ENCODE measurements at regions of chr14 and their contacts with region 1.

Region 1: DNA sequence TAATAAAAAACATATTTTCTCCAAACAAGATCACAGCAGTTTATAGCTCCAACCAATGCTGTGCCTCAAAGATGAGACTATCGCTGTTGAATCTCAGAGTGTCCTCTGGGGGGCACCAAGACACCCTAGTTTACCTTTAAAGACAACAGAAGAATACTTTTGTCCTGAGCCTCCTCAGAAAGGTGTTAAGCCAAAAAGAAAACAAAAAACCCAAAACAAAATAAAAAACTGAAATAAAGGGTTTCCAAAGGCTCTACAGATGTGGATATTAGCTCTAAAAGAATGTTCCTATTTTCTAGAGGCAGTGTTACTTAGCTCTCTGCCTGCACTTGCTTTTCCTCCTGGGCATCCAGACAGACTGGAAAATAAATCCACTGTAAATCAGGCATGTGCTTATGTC is 86.9 kb upstream of the TTC7B start:
- DNase-seq: peak; percentile 77
- ATAC-seq: peak; percentile 84
- H3K4me3 Mint-ChIP-seq: no peak overlapping the region
- H3K27ac Mint-ChIP-seq: no peak overlapping the region
- H3K4me1 Mint-ChIP-seq: peaks cover 19% of the 10 kb centered on the region
- H3K27me3 Mint-ChIP-seq: no peaks in the 10 kb centered on the region
- CTCF ChIP-seq: peak; percentile 92

Region 2: DNA sequence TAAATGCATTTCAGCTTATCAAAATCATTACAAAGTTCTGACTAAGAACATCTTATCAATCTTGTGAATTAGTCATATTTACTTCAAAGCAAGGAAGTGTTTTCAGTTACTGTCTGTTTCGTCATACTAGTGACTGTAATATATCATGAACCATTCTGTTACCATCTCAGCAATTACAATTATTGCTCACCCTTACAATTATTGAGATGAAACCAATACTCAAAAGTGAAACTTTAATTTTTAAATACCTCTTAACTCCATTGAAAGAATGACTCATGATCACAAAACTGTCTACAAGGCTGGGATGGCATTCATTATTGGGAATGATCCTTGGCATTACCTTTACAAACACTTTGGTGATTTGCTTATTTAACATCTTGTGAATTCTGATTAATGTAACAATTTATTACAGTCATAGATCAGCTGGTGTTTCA is 67.1 kb after region 1 on chr14:
- CTCF ChIA-PET with region 1: interaction called, 27 read pairs
- POLR2A ChIA-PET with region 1: no interaction called
- intact Hi-C with region 1: loop called (anchors 5 kb)
- DNase-seq: no peak
- ATAC-seq: peak; percentile 85
- H3K4me3 Mint-ChIP-seq: peak overlapping the region; percentile 42
- H3K27ac Mint-ChIP-seq: peak overlapping the region; percentile 89
- H3K4me1 Mint-ChIP-seq: peaks cover 49% of the 10 kb centered on the region
- H3K27me3 Mint-ChIP-seq: no peaks in the 10 kb centered on the region
- CTCF ChIP-seq: no peak

Region 3: GRCh38 chr14:91060351-91061055 is 157.4 kb after region 1 on chr14 and contains the start of gene RPS6KA5:
- CTCF ChIA-PET with region 1: interaction called, 13 read pairs
- POLR2A ChIA-PET with region 1: interaction called, 3 read pairs
- intact Hi-C with region 1: loop called (anchors 10 kb)
- DNase-seq: peak; percentile 100
- ATAC-seq: peak; percentile 86
- H3K4me3 Mint-ChIP-seq: peak within 1 kb of the TSS; percentile 77
- H3K27ac Mint-ChIP-seq: peak within 1 kb of the TSS; percentile 58
- H3K4me1 Mint-ChIP-seq: peaks cover 53% of the 10 kb centered on the region
- H3K27me3 Mint-ChIP-seq: no peaks in the 10 kb centered on the region
- CTCF ChIP-seq: no peak
- total RNA-seq, gene RPS6KA5: 12.8 to 12.9 TPM

Region 4: GRCh38 chr14:91138511-91139359 is 235.6 kb after region 1 on chr14:
- CTCF ChIA-PET with region 1: interaction called, 17 read pairs
- POLR2A ChIA-PET with region 1: no interaction called
- intact Hi-C with region 1: no loop called
- DNase-seq: peak; percentile 75
- ATAC-seq: peak; percentile 80
- H3K4me3 Mint-ChIP-seq: no peak overlapping the region
- H3K27ac Mint-ChIP-seq: peak overlapping the region; percentile 55
- H3K4me1 Mint-ChIP-seq: peaks cover 44% of the 10 kb centered on the region
- H3K27me3 Mint-ChIP-seq: no peaks in the 10 kb centered on the region
- CTCF ChIP-seq: peak; percentile 83

Region 5: DNA sequence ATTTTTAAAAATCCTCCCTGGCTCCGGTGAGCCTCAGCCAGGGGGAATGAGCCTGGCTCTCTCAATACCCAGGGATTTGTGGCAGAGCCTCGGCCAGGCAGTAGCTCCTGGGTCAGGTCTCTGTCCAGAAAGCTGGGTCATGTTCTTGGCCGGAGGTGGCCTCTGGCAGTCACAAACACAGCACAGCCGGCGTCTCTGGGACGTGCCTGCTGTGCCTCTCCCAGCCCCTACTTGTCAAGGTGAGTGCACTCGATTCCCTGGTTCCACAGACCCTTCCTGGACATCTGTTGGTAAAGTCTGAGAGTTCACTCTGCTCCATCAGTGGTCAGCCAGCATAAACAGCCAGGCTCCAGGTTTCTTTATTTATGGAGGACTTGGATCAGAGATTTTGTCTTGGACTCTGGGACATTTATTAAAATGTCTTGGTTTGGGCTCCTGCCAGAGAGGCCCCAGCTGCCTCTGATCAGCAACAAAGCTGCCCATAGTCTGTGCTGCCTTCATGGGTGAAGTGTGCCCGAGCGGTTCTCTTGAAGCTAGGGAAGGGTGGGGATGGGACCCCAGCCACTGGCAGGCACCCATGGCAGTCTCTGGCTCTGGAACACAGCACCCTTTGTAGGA is 267.5 kb after region 1 on chr14:
- CTCF ChIA-PET with region 1: interaction called, 175 read pairs
- POLR2A ChIA-PET with region 1: interaction called, 5 read pairs
- intact Hi-C with region 1: loop called (anchors 1 kb)
- DNase-seq: no peak
- ATAC-seq: no peak
- H3K4me3 Mint-ChIP-seq: no peak overlapping the region
- H3K27ac Mint-ChIP-seq: no peak overlapping the region
- H3K4me1 Mint-ChIP-seq: peaks cover 4% of the 10 kb centered on the region
- H3K27me3 Mint-ChIP-seq: no peaks in the 10 kb centered on the region
- CTCF ChIP-seq: no peak

Region 6: DNA sequence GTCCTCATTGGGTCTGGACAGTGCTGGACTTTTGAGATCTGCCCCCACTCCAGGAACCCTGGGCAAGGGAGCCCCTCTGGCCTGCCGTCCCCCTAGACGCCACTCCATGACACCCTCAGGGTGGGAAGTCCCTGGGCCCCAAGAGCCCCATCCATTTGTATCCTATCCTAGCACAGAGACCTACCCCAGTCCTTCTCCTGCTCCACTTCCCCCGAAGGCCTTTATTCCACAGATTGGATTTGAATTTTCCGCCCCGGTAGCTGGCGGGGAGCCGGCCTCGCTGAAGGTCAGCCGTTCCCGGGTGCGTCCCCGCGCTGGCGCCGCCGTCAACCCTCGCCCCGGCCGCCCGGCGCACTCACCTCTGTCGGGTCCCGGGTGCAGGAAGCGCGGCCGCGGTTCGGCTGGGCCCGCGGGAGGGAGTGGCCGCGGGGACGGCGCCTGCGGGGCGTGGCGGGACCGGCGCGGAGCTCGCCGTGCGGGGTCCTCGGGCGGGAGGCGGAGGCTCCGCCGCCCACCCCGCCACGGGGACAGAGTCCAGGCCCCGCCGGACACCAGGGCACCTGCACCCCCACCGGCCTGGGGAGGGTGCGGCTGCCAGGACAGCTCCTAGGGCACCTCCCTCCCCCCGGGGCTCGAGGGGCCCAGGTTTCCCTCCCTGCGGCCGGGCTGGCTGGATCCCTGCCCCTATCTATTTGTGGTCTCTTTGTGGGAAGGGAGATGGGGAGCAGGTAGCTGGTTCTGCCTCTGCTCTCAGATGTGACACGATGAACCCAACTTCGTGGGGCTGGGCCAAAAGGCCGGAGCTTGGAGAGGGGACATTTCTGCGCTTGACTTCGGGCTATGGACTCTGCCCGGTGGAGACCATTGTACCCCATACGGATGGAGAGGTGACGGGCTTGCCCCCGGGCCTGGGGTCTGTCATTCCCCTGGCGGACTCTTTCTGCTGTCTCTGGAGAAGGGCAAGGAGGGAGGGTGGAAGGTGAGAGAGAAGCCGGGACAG is 361.4 kb after region 1 on chr14:
- CTCF ChIA-PET with region 1: no interaction called
- POLR2A ChIA-PET with region 1: no interaction called
- intact Hi-C with region 1: no loop called
- DNase-seq: peak; percentile 32
- ATAC-seq: peak; percentile 32
- H3K4me3 Mint-ChIP-seq: peak overlapping the region; percentile 54
- H3K27ac Mint-ChIP-seq: peak overlapping the region; percentile 63
- H3K4me1 Mint-ChIP-seq: peaks cover 51% of the 10 kb centered on the region
- H3K27me3 Mint-ChIP-seq: no peaks in the 10 kb centered on the region
- CTCF ChIP-seq: no peak

Region 7: DNA sequence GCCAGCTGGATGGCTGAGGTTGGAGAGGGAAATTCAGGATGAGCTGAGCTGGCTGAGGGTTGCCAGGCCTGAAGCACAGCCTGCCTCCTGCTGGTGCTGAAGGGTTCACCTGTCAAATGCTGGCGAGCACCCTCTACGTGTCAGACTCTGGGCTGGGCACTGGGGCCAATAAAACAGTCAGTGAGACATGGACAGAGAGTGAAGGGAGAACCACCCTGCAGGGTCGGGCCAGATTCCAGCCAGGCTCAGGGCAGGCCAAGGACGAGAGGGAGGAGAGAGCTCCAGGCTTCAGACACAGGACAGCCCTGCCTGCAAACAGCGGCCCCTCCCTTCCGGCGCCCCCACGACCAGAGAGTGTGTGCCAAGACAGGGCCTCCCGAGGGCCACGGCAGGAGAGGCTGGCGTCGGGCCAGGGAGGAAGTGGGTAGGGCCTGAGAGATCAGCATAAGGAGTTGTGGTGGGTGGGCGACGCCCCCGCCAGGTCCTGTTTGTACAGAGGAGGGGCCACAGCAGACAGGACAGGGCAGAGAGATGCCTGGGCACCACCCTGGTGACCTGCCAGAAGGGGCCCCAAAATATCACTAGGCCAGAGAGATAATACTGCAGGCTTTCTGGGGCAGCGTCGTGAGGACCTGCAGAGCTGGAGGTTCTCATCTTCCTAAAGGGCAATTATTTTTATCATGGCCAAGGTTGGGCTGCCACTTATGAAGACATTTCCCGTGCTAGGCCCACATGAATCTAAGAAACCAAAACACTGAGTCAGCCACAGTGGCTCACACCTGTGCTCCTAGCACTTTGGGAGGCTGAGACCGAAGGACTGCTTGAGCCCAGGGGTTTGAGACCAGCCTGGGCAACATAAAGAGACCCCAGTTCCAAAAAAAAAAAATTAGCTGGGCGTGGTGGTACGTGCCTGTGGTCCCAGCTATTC is 414.5 kb after region 1 on chr14:
- CTCF ChIA-PET with region 1: no interaction called
- POLR2A ChIA-PET with region 1: no interaction called
- intact Hi-C with region 1: no loop called
- DNase-seq: peak; percentile 97
- ATAC-seq: peak; percentile 65
- H3K4me3 Mint-ChIP-seq: peak overlapping the region; percentile 64
- H3K27ac Mint-ChIP-seq: peak overlapping the region; percentile 97
- H3K4me1 Mint-ChIP-seq: peaks cover 84% of the 10 kb centered on the region
- H3K27me3 Mint-ChIP-seq: no peaks in the 10 kb centered on the region
- CTCF ChIP-seq: peak; percentile 54

Measured in activated CD8-positive, alpha-beta T cell treated with anti-CD3 and anti-CD28 coated beads for 36 hours (primary cell).